Thyroid gland (tissue), 4 donors: ENCODE measurements at regions of chr11 and their contacts with region 1.

Region 1: GRCh38 chr11:18634140-18635032 is at the start of gene SPTY2D1:
- DNase-seq: peak; percentile 100
- H3K4me3 ChIP-seq: peak within 1 kb of the TSS; percentile 12 to 74 (median 71)
- H3K27ac ChIP-seq: peak within 1 kb of the TSS; percentile 69 to 95 (median 94)
- H3K4me1 ChIP-seq: peaks cover 8 to 14% of the 10 kb centered on the region in 2 donors
- H3K27me3 ChIP-seq: no peaks in the 10 kb centered on the region
- CTCF ChIP-seq: peak in 1 of 6 experiments; percentile 4
- POLR2A ChIP-seq: peak; percentile 37 to 94
- total RNA-seq, gene SPTY2D1: 18.1 to 26.9 (median 24.9) TPM

Region 2: DNA sequence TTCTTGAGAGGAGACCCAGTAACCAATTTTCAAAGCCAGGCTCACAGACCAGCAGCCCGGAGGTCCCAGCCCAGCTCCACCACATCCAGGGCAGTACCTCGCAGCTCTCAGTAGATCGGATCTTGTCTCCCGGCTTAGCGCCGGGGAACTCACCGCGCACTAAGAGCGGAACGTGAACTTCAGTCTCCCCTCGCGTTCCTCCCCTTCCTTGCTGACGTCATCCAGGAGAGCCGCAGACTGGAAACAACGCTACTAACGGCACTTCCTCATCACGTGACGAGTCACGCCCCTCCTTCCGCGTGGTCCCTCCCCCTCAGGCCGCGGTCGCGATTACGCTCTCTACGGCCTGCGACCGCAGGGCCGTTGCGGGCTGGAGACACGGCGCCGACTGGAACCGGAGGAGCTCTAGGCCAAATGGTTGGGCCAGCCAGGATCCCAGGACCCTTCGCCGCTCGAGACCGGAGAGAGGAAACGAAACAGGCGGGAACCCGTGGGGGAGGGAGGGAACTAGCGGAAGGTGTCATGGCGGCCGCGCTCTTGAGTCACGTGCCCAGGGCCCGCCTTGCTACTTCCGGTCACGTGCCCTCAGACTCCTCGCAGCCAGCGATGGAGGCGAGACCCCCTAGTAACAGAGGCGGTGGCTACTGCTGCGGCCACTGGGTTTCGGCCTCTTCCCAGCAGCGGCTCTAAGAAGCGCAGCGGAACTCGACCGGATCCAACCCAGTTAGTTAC is 312.2 kb before region 1 on chr11 and contains the starts of genes GTF2H1 and HPS5:
- intact Hi-C with region 1: loop called (anchors 5 kb)
- DNase-seq: peak; percentile 96
- H3K4me3 ChIP-seq: peak within 1 kb of the TSS; percentile 84 to 100 (median 91)
- H3K27ac ChIP-seq: peak within 1 kb of the TSS; percentile 98 to 100 (median 98)
- H3K4me1 ChIP-seq: peaks cover 27 to 32% of the 10 kb centered on the region in 2 donors
- H3K27me3 ChIP-seq: no peaks in the 10 kb centered on the region
- CTCF ChIP-seq: no peak
- POLR2A ChIP-seq: peak in 1 of 2 donors; percentile 85
- total RNA-seq, gene GTF2H1: 61.9 to 81.4 (median 72.4) TPM
- total RNA-seq, gene HPS5: 21.0 to 26.7 (median 24.2) TPM

Region 3: GRCh38 chr11:18536191-18536674 is 98.2 kb before region 1 on chr11:
- intact Hi-C with region 1: loop called (anchors 10 kb)
- DNase-seq: no peak
- H3K4me3 ChIP-seq: no peak overlapping the region
- H3K27ac ChIP-seq: no peak overlapping the region
- H3K4me1 ChIP-seq: no peaks in the 10 kb centered on the region
- H3K27me3 ChIP-seq: no peaks in the 10 kb centered on the region
- CTCF ChIP-seq: no peak
- POLR2A ChIP-seq: no peak

Region 4: GRCh38 chr11:18588297-18589252 is 45.8 kb before region 1 on chr11 and contains the start of gene UEVLD:
- intact Hi-C with region 1: loop called (anchors 10 kb)
- DNase-seq: peak; percentile 89
- H3K4me3 ChIP-seq: peak within 1 kb of the TSS; percentile 21 to 55 (median 36)
- H3K27ac ChIP-seq: peak within 1 kb of the TSS in 2 of 3 donors; percentile 54 to 85
- H3K4me1 ChIP-seq: peaks cover 9 to 15% of the 10 kb centered on the region in 2 donors
- H3K27me3 ChIP-seq: no peaks in the 10 kb centered on the region
- CTCF ChIP-seq: no peak
- POLR2A ChIP-seq: peak in 1 of 2 donors; percentile 70
- total RNA-seq, gene UEVLD: 19.5 to 37.9 (median 35.4) TPM

Region 5: GRCh38 chr11:18608376-18608775 is 26.0 kb before region 1 on chr11:
- intact Hi-C with region 1: no loop called
- DNase-seq: no peak
- H3K4me3 ChIP-seq: no peak overlapping the region
- H3K27ac ChIP-seq: no peak overlapping the region
- H3K4me1 ChIP-seq: no peaks in the 10 kb centered on the region
- H3K27me3 ChIP-seq: no peaks in the 10 kb centered on the region
- CTCF ChIP-seq: no peak
- POLR2A ChIP-seq: no peak

Region 6: DNA sequence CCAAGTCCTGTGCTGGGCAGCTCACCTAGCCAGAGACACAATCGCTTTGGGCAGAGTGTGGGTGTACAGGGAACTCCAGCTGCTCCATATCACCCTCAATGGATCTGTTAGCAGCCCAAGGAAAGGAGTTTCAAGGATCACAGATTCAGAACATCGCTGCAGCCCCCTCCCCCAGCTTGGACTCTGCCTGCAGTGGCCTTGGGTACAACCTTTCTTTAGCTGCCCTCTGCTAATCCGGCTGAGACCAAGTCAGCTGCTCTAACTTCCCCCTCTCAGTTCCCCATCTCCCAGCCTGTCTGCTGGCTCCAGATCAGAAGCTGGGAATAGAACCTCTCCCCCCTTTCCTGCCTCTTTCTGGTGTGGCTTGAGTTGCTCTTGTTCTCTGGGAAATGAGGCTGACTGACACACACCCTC is 65.5 kb after region 1 on chr11:
- intact Hi-C with region 1: loop called (anchors 5 kb)
- DNase-seq: no peak
- H3K4me3 ChIP-seq: peak overlapping the region in 1 of 3 donors; percentile 84
- H3K27ac ChIP-seq: peak overlapping the region in 1 of 3 donors; percentile 54
- H3K4me1 ChIP-seq: peaks cover 10 to 20% of the 10 kb centered on the region in 2 donors
- H3K27me3 ChIP-seq: no peaks in the 10 kb centered on the region
- CTCF ChIP-seq: no peak
- POLR2A ChIP-seq: no peak